ENCODE measurements at regions of chr7 and their contacts with region 1.

Region 1: GRCh38 chr7:158440527-158440926 is 147.1 kb downstream of the PTPRN2 start:
- DNase-seq: no peak
- ATAC-seq: no peak

Region 2: GRCh38 chr7:158467562-158467961 is 27.0 kb after region 1 on chr7:
- intact Hi-C with region 1: loop called in 1 of 2 experiments (anchors 2 kb)
- DNase-seq: no peak
- ATAC-seq: no peak